ENCODE measurements at regions of chr3 and their contacts with region 1.

Region 1: GRCh38 chr3:61505197-61505596 is 56.2 kb upstream of the PTPRG start:
- DNase-seq: no peak
- H3K4me3 ChIP-seq: no peak overlapping the region
- H3K27ac ChIP-seq: no peak overlapping the region
- H3K4me1 ChIP-seq: no peaks in the 10 kb centered on the region
- H3K27me3 ChIP-seq: no peaks in the 10 kb centered on the region
- CTCF ChIP-seq: no peak
- EP300 ChIP-seq: no peak
- RAD21 ChIP-seq: no peak

Region 2: GRCh38 chr3:61111825-61112224 is 393.4 kb before region 1 on chr3:
- CTCF ChIA-PET with region 1: no interaction called
- POLR2A ChIA-PET with region 1: no interaction called
- DNase-seq: no peak
- H3K4me3 ChIP-seq: no peak overlapping the region
- H3K27ac ChIP-seq: no peak overlapping the region
- H3K4me1 ChIP-seq: peaks cover 0 to 2% of the 10 kb centered on the region in 2 experiments; a peak in 1 of 4 replicates
- H3K27me3 ChIP-seq: no peaks in the 10 kb centered on the region
- CTCF ChIP-seq: no peak
- EP300 ChIP-seq: no peak
- RAD21 ChIP-seq: no peak

Region 3: DNA sequence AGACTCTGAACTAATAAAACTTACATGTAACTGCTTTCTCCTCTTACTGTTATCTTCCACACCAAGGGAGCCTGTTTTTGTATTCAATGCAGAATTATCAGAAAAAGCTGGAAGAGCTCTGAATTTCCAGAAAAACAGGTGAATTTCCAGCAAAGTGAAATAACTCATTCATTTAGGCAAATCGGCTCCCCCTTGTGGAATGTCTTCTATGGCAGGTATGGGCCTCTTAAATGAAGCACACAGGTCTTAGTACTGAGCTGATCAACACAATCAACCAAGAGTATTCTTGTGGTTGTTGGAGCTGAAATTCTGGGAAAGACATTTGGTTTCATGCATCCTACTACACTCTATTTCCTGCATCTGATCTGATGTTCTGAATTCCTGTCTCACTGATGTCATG is 25.2 kb after region 1 on chr3:
- CTCF ChIA-PET with region 1: interaction called, 10 read pairs
- POLR2A ChIA-PET with region 1: no interaction called
- DNase-seq: peak; percentile 26
- H3K4me3 ChIP-seq: no peak overlapping the region; a peak in 1 of 4 replicates
- H3K27ac ChIP-seq: no peak overlapping the region
- H3K4me1 ChIP-seq: no peaks in the 10 kb centered on the region
- H3K27me3 ChIP-seq: no peaks in the 10 kb centered on the region
- CTCF ChIP-seq: peak; percentile 51
- EP300 ChIP-seq: no peak
- RAD21 ChIP-seq: peak; percentile 52